Cardiac septum (tissue), 1 donor: ENCODE measurements at regions of chr3 and their contacts with region 1.

Region 1: DNA sequence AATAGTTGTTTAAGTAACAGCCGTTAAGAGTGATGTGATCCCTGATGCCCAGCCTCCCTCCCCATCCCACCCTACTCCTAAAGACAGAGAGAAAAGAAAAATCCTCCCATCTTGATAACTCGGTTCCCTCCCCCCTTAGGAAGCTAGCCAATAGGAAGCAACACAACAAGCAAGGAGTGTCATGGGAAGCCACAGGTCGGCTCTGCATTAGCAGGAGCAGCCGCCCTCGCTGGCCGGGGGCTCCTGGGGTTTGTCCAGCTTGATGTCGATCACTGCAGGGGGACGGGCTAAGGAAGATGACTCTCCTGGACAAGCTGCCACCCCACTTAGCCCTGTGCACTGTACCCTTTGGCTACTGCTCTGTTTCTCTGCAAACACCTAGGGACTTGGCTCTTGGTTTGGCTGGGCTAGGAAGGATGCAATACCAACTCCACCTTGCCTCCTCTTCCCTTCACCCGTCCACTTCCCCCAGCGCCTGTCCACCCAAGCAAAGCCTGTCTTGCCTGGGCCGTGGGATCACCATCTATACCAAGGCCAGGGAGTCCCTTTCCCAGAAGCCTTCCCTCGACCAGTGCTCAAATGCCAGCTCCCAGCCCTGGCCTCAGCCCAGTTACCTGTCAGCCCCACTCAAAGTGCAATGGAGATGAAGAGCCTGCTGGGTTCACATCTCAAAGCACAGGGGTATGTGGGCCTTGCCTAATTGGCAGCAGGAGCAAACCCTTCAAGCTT is 23.1 kb downstream of the SRPRB start:
- DNase-seq: peak; percentile 76

Region 2: DNA sequence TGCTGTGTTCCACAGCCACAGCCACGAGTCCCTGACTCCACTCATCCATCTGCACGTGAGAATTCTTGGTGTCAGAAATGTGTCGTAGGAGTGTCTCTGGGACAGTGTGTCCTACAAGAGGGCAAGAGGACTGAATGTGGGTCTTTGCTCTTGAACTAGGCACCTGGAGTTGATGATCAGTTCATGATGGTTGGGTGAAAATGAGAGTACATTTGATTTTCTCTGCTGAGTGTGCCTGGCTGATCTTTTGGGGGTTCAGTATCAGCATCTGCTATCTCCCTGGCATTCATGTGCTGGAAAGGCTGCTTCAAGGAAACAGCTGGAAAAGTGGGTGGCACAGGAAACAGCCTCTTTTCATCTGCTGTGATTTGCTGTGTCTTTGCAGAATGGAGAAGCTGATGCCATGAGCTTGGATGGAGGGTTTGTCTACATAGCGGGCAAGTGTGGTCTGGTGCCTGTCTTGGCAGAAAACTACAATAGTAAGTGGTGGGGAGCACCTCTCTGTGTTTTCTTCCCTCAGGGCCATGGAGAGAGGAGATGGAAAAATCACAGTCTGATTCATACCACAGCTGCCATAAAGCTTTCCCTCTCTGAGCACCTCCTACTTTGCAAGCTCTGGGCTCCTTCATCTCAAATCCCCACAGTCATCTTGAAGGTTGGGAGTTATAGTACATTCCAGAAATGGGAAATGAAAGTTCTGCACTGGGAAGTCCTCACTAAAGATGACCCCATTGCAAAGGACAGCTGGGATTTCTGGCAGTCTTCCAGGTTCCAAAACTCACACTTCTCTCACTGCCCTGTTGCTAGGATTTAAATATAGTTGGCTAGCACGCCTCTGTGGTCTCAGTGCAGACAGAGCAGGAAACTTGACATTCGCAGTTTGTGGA is 64.7 kb before region 1 on chr3:
- intact Hi-C with region 1: no loop called
- DNase-seq: no peak

Region 3: GRCh38 chr3:133857767-133858166 is 29.0 kb after region 1 on chr3:
- intact Hi-C with region 1: no loop called
- DNase-seq: peak; percentile 46

Region 4: GRCh38 chr3:133895208-133896001 is 66.7 kb after region 1 on chr3 and contains the start of gene RAB6B:
- intact Hi-C with region 1: loop called (anchors 2 kb)
- DNase-seq: peak; percentile 72
- total RNA-seq, gene RAB6B: 42.4 TPM